ENCODE measurements at regions of chr11 and their contacts with region 1.

Region 1: DNA sequence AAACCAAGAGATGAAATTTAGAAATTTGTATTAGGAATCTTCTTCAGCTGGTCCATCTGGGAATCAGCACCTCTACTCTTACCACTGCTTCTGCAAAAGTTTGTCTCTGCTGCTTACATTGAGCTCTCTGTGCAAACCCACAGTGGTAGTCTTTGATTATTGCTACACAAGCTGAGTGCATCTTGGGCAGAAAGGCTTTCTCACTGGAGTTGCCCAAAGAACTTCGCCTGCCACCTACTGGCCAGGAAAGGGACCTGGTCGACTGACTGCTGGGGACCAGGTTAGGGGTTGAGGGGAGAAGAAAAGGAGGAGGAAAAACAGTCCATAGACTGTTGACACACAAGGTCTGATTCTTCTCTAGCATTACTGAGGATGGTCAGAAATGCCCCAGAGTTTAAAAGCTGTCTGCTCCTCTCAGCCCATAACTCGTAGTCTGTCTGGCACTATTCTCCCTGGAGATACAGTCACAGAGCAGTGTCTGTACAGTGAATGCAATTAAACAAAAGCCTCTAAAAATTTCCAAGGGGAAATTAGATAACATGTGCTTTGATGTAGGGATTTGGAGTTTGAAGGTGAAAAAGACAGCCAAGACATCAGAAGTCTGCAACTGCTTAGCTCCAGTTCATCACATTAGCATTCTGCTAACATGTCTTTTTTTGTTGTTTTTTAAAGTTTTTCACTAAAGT is 215.0 kb upstream of the CTSC start:
- DNase-seq: peak; percentile 12
- ATAC-seq: peak; percentile 100
- H3K4me3 ChIP-seq: no peak overlapping the region
- H3K27ac ChIP-seq: no peak overlapping the region
- H3K4me1 ChIP-seq: no peaks in the 10 kb centered on the region
- H3K27me3 ChIP-seq: peaks cover 0 to 10% of the 10 kb centered on the region in 2 experiments; a peak in 2 of 4 replicates
- CTCF ChIP-seq: peak; percentile 84 to 93 (median 91)
- EP300 ChIP-seq: no peak
- POLR2A ChIP-seq: no peak
- RAD21 ChIP-seq: peak; percentile 86

Region 2: DNA sequence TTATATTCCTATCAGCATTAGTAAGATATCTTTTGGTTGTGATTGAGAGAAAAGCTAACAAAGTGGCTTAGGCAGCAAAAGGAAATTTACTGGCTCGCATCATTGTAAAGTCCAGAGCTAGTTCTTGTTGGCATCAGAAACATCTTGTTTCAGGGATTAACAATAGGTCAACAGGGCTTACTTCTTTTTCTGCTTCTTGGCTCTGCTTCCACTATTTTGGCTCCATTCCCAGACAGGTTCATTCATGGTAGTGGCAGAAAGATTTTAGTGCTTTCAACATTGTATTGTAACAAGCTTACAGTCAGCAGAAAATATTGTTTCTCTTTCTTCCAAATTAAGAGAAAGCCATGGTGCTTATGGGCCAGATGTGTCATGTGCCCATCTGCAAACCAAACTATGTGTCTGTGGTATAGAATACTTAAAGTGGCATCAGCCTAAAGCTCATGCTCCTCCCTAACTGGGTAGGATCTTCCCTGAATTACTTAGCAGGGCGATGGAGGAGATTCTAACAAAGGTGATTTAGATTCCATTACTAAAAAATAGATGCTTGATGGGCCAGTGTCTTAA is 692.9 kb before region 1 on chr11:
- CTCF ChIA-PET with region 1: no interaction called
- POLR2A ChIA-PET with region 1: no interaction called
- RAD21 ChIA-PET with region 1: no interaction called
- SMC1A ChIA-PET with region 1: no interaction called
- in situ Hi-C with region 1: no loop called
- intact Hi-C with region 1: no loop called
- DNase-seq: no peak
- ATAC-seq: no peak
- H3K4me3 ChIP-seq: no peak overlapping the region
- H3K27ac ChIP-seq: no peak overlapping the region
- H3K4me1 ChIP-seq: no peaks in the 10 kb centered on the region
- H3K27me3 ChIP-seq: no peaks in the 10 kb centered on the region; a peak in 1 of 4 replicates
- CTCF ChIP-seq: no peak
- EP300 ChIP-seq: no peak
- POLR2A ChIP-seq: no peak
- RAD21 ChIP-seq: no peak

Region 3: GRCh38 chr11:88327061-88327460 is 225.5 kb before region 1 on chr11:
- CTCF ChIA-PET with region 1: no interaction called
- POLR2A ChIA-PET with region 1: no interaction called
- RAD21 ChIA-PET with region 1: no interaction called
- SMC1A ChIA-PET with region 1: no interaction called
- in situ Hi-C with region 1: no loop called
- intact Hi-C with region 1: no loop called
- DNase-seq: no peak
- ATAC-seq: peak; percentile 44
- H3K4me3 ChIP-seq: peak overlapping the region; percentile 23; the same call in 1 of the 2 replicates
- H3K27ac ChIP-seq: peak overlapping the region; percentile 67; the same call in 1 of the 2 replicates
- H3K4me1 ChIP-seq: peaks cover 42% of the 10 kb centered on the region
- H3K27me3 ChIP-seq: no peaks in the 10 kb centered on the region
- CTCF ChIP-seq: no peak
- EP300 ChIP-seq: peak; percentile 46 to 80; a peak in 1 of 4 replicates
- POLR2A ChIP-seq: no peak
- RAD21 ChIP-seq: no peak

Region 4: GRCh38 chr11:88494848-88495247 is 57.7 kb before region 1 on chr11:
- CTCF ChIA-PET with region 1: no interaction called
- POLR2A ChIA-PET with region 1: no interaction called
- RAD21 ChIA-PET with region 1: no interaction called
- SMC1A ChIA-PET with region 1: no interaction called
- in situ Hi-C with region 1: no loop called
- intact Hi-C with region 1: no loop called
- DNase-seq: no peak
- ATAC-seq: no peak; the same call in 2 of the 3 replicates
- H3K4me3 ChIP-seq: no peak overlapping the region
- H3K27ac ChIP-seq: no peak overlapping the region
- H3K4me1 ChIP-seq: no peaks in the 10 kb centered on the region
- H3K27me3 ChIP-seq: no peaks in the 10 kb centered on the region
- CTCF ChIP-seq: 0 out of 6 replicates have a peak, but pooled peaks of 1 of the 3 experiments have one; percentile 2
- EP300 ChIP-seq: no peak
- POLR2A ChIP-seq: no peak
- RAD21 ChIP-seq: peak; percentile 42

Region 5: GRCh38 chr11:88886796-88887195 is 334.3 kb after region 1 on chr11:
- CTCF ChIA-PET with region 1: interaction called, 28 read pairs
- POLR2A ChIA-PET with region 1: no interaction called
- RAD21 ChIA-PET with region 1: interaction called, 14 read pairs
- SMC1A ChIA-PET with region 1: interaction called, 4 read pairs
- in situ Hi-C with region 1: loop called (anchors 10 kb)
- intact Hi-C with region 1: loop called (anchors 1 kb)
- DNase-seq: peak; percentile 11
- ATAC-seq: peak; percentile 98
- H3K4me3 ChIP-seq: no peak overlapping the region
- H3K27ac ChIP-seq: no peak overlapping the region
- H3K4me1 ChIP-seq: no peaks in the 10 kb centered on the region
- H3K27me3 ChIP-seq: no peaks in the 10 kb centered on the region
- CTCF ChIP-seq: peak; percentile 62 to 64 (median 62); a peak in 5 of 6 replicates
- EP300 ChIP-seq: no peak
- POLR2A ChIP-seq: no peak
- RAD21 ChIP-seq: peak; percentile 80